Heart left ventricle (tissue), 16 donors: ENCODE measurements at regions of chr1 and their contacts with region 1.

Region 1: DNA sequence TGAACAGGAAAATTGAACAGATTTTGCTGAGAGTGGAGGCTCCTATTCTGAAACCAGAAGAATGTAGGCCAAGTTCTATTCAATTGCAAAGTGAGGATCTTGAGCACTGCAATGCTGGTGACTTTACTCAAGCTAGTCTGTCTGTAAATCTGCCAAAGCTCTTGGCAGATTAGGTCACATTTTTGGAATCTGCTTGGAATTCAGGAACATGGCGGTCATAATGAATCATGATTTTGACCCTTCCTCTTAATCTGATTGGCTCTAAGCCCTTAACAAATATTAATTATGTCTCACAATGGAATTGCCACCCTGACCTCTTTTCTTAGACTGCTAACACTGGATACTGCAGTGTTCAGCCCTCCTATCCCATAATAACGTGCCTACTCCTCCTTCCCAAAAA is 7.2 kb upstream of the GNG12 start:
- DNase-seq: no peak
- ATAC-seq: peak in 3 of 4 donors; percentile 45 to 77 (median 55)
- H3K4me3 ChIP-seq: no peak overlapping the region
- H3K27ac ChIP-seq: no peak overlapping the region
- H3K4me1 ChIP-seq: peaks cover 0 to 20% (median 10%) of the 10 kb centered on the region in 12 donors
- H3K27me3 ChIP-seq: peaks cover 0 to 6% (median 0%) of the 10 kb centered on the region in 9 donors
- CTCF ChIP-seq: no peak
- POLR2A ChIP-seq: no peak

Region 2: GRCh38 chr1:67777440-67777839 is 63.0 kb before region 1 on chr1:
- intact Hi-C with region 1: loop called in 2 of 10 experiments (anchors 5 kb)
- DNase-seq: no peak
- ATAC-seq: no peak
- H3K4me3 ChIP-seq: no peak overlapping the region
- H3K27ac ChIP-seq: peak overlapping the region in 5 of 12 donors; percentile 24 to 46 (median 32)
- H3K4me1 ChIP-seq: peaks cover 0 to 19% (median under 1%) of the 10 kb centered on the region in 12 donors
- H3K27me3 ChIP-seq: no peaks in the 10 kb centered on the region
- CTCF ChIP-seq: no peak
- POLR2A ChIP-seq: no peak